Ascending aorta (tissue), 2 donors: ENCODE measurements at regions of chr11 and their contacts with region 1.

Region 1: DNA sequence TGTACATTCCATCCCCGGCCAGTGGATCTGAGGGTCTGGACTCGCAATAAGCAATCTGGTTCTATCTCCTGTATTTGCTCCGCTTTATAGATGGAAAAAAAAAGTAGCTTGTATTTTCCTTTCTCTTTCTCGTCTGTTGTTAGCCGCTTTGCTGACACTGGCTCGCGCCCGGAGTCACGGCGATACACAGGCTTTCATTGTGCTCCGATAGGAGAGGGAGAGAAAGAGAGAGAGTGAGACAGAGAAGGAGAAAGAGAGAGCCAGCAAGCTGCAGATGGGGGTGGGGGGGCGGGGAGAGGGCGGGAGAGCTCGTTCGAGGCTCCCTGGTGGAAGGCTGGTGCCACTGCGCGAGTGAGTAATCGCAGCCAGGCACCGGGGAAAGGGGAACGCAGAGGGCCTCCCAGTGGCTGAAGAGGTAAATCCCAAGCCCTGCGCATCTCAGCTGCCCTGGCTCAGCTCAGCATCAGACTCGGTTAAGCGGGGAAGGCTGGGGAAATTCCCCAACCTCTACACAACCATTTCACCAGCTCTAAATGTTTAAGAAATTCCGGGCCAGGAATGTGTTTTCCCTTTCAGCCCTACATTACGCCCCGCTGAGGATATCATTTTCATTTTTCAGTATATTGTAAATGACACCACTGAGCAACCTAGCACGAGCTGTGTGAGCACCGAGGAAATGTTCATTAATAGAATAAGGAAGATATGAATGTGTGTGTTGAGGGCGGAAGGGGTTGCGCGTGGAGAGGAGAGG is at the start of gene MAML2:
- DNase-seq: peak; percentile 78 to 97
- H3K4me3 ChIP-seq: peak within 1 kb of the TSS; percentile 59 to 85
- H3K27ac ChIP-seq: peak within 1 kb of the TSS; percentile 86 to 95
- H3K4me1 ChIP-seq: peaks cover 4 to 24% of the 10 kb centered on the region in 2 donors
- H3K27me3 ChIP-seq: no peaks in the 10 kb centered on the region
- CTCF ChIP-seq: peak; percentile 94 to 98 (median 97)
- total RNA-seq, gene MAML2: 13.2 TPM

Region 2: DNA sequence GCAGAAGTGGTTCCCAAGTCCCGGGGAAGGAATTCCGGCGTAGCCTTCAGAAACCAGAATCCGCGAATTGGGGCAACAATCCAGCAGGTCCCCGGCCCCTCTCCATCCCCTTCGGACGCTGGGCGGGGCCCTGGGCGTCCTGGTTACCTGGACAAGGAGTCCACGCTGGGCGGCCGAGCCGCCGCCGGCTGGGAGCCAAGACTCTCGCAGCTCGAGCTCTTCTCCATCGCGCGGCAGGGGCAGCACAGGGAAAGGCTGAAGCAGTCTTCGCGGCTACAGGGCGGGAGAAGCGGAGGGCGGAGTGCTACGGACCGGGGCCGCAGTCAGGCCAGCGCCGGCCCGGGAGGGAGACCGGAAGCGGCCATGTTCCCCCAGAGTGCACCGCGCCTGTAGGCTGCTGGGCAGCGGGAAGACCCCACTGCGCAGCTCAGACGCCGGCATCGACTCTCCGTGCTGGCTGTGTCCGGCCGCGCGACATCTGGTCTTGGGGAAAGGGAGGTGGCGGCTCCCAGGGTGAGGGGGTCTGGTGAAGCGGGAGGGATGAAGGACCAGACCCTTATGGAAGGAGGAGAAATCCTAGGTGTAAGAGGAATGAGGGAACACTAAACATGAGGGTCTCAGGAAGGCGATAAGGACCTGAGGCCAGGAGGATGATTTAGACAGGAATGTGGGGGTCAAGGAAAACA is 419.3 kb before region 1 on chr11 and contains the start of gene MTMR2:
- intact Hi-C with region 1: loop called (anchors 2 kb)
- DNase-seq: peak in 1 of 2 donors; percentile 88
- H3K4me3 ChIP-seq: peak within 1 kb of the TSS; percentile 86
- H3K27ac ChIP-seq: peak within 1 kb of the TSS; percentile 94 to 98
- H3K4me1 ChIP-seq: peaks cover 0 to 11% of the 10 kb centered on the region in 2 donors
- H3K27me3 ChIP-seq: no peaks in the 10 kb centered on the region
- CTCF ChIP-seq: no peak
- total RNA-seq, gene MTMR2: 14.7 TPM

Region 3: DNA sequence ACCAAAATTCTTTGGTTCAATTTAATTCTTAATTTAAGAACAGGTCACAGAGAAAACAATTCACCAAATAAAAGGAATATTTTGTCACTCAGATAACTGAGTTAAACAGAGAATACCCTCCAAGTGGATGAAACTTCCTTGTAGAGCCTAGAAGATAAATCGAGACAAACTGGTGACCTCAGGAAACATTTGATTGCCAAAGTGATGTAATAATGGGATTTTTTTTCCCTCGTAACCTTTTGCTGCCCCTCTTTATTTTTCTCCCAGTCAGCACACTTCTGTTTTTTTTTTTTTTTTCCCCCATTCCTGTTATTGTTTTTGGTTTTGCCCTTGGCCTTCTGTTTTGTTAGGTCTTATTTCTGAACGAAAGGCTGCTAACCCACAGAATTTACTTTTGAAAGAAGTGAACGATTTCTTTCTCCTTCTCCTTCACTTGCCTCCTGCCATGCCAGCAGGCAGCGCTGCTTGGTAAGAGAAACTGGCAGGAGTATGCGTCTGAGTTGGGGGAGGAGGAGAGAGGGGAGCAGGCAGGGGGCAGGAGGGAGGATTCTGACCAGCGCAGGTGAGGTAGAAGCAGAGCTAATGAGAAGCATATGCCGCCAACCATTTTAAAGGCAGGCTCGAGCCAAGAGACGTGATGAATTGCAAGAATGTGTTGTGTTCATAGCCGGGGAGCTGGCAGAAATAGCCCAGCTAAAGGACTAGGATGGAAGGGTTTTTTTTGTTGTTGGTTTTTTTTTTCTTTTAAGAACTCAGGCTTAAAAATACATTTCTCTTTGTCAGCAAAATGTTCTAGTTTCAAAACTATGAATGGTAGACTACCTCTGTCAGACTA is 297.3 kb before region 1 on chr11:
- intact Hi-C with region 1: loop called (anchors 2 kb)
- DNase-seq: peak; percentile 23 to 86
- H3K4me3 ChIP-seq: peak overlapping the region; percentile 37 to 51
- H3K27ac ChIP-seq: peak overlapping the region; percentile 73 to 90
- H3K4me1 ChIP-seq: peaks cover 0 to 25% of the 10 kb centered on the region in 2 donors
- H3K27me3 ChIP-seq: no peaks in the 10 kb centered on the region
- CTCF ChIP-seq: peak; percentile 32 to 72 (median 35)

Region 4: GRCh38 chr11:96162816-96163499 is 180.2 kb before region 1 on chr11:
- intact Hi-C with region 1: loop called (anchors 2 kb)
- DNase-seq: peak in 1 of 2 donors; percentile 78
- H3K4me3 ChIP-seq: no peak overlapping the region
- H3K27ac ChIP-seq: peak overlapping the region; percentile 54 to 74
- H3K4me1 ChIP-seq: peaks cover 0 to 49% of the 10 kb centered on the region in 2 donors
- H3K27me3 ChIP-seq: no peaks in the 10 kb centered on the region
- CTCF ChIP-seq: no peak

Region 5: GRCh38 chr11:96263361-96263763 is 79.8 kb before region 1 on chr11:
- intact Hi-C with region 1: loop called (anchors 5 kb)
- DNase-seq: no peak
- H3K4me3 ChIP-seq: no peak overlapping the region
- H3K27ac ChIP-seq: peak overlapping the region; percentile 75 to 82
- H3K4me1 ChIP-seq: peaks cover 16 to 52% of the 10 kb centered on the region in 2 donors
- H3K27me3 ChIP-seq: no peaks in the 10 kb centered on the region
- CTCF ChIP-seq: peak in 1 of 3 experiments; percentile 9

Region 6: GRCh38 chr11:96389720-96390487 is 46.8 kb after region 1 on chr11 and contains the starts of genes CCDC82 and JRKL:
- intact Hi-C with region 1: loop called (anchors 5 kb)
- DNase-seq: peak; percentile 88 to 98
- H3K4me3 ChIP-seq: peak within 1 kb of the TSS; percentile 89 to 97
- H3K27ac ChIP-seq: peak within 1 kb of the TSS; percentile 83 to 90
- H3K4me1 ChIP-seq: peaks cover 0 to 16% of the 10 kb centered on the region in 2 donors
- H3K27me3 ChIP-seq: no peaks in the 10 kb centered on the region
- CTCF ChIP-seq: no peak
- total RNA-seq, gene CCDC82: 9.5 TPM
- total RNA-seq, gene JRKL: 16.6 TPM